ENCODE measurements at regions of chr12 and their contacts with region 1.

Region 1: GRCh38 chr12:111975161-111975931 is 37.6 kb downstream of the TMEM116 start:
- DNase-seq: no peak
- H3K4me3 ChIP-seq: no peak overlapping the region
- H3K27ac ChIP-seq: no peak overlapping the region
- H3K4me1 ChIP-seq: no peaks in the 10 kb centered on the region
- H3K27me3 ChIP-seq: no peaks in the 10 kb centered on the region
- CTCF ChIP-seq: no peak
- POLR2A ChIP-seq: no peak

Region 2: GRCh38 chr12:111953455-111953854 is 21.9 kb before region 1 on chr12:
- intact Hi-C with region 1: no loop called
- DNase-seq: no peak
- H3K4me3 ChIP-seq: no peak overlapping the region
- H3K27ac ChIP-seq: no peak overlapping the region
- H3K4me1 ChIP-seq: no peaks in the 10 kb centered on the region
- H3K27me3 ChIP-seq: no peaks in the 10 kb centered on the region
- CTCF ChIP-seq: no peak
- POLR2A ChIP-seq: no peak

Region 3: DNA sequence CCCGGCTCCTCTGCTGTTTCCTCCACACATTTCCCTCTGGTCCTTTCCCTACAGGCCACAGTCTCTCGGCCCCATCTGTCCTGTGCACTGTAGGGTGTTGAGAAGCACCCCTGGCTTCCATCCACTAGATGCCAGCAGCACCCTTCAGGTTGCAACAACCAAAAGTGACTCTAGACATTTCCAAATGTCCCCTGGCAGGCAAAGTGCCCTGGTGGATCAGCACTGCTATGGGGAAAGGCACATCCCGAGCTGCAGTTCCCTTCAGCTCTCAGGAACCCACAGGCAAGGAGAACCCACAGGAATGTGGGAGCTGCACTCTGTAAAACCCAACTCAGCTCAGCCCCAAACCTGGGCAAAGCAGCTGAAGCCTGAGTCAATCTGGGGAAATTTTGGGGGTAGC is 1913.7 kb after region 1 on chr12:
- intact Hi-C with region 1: loop called (anchors 10 kb)
- DNase-seq: peak in 1 of 2 donors; percentile 50
- H3K4me3 ChIP-seq: no peak overlapping the region
- H3K27ac ChIP-seq: no peak overlapping the region
- H3K4me1 ChIP-seq: peaks cover 0 to 9% of the 10 kb centered on the region in 2 donors
- H3K27me3 ChIP-seq: no peaks in the 10 kb centered on the region
- CTCF ChIP-seq: peak in 1 of 3 donors; percentile 40
- POLR2A ChIP-seq: no peak

Measured in breast epithelium (tissue), 4 donors.